HAP-1 (cell line): ENCODE measurements at regions of chr6 and their contacts with region 1.

Region 1: GRCh38 chr6:42260972-42261371 is 43.3 kb upstream of the MRPS10 start:
- DNase-seq: peak in 1 of 2 experiments; percentile 68
- H3K4me3 ChIP-seq: no peak overlapping the region
- H3K4me1 ChIP-seq: no peaks in the 10 kb centered on the region
- H3K27me3 ChIP-seq: no peaks in the 10 kb centered on the region

Region 2: GRCh38 chr6:42407379-42407778 is 146.4 kb after region 1 on chr6:
- in situ Hi-C with region 1: no loop called
- DNase-seq: no peak
- H3K4me3 ChIP-seq: no peak overlapping the region
- H3K4me1 ChIP-seq: peaks cover 47% of the 10 kb centered on the region
- H3K27me3 ChIP-seq: no peaks in the 10 kb centered on the region

Region 3: GRCh38 chr6:42547407-42548329 is 286.7 kb after region 1 on chr6:
- in situ Hi-C with region 1: loop called (anchors 25 kb)
- DNase-seq: peak; percentile 76 to 91
- H3K4me3 ChIP-seq: peak overlapping the region; percentile 33
- H3K4me1 ChIP-seq: peaks cover 11% of the 10 kb centered on the region
- H3K27me3 ChIP-seq: no peaks in the 10 kb centered on the region